Mammary epithelial cell (primary cell): ENCODE measurements at regions of chr19 and their contacts with region 1.

Region 1: DNA sequence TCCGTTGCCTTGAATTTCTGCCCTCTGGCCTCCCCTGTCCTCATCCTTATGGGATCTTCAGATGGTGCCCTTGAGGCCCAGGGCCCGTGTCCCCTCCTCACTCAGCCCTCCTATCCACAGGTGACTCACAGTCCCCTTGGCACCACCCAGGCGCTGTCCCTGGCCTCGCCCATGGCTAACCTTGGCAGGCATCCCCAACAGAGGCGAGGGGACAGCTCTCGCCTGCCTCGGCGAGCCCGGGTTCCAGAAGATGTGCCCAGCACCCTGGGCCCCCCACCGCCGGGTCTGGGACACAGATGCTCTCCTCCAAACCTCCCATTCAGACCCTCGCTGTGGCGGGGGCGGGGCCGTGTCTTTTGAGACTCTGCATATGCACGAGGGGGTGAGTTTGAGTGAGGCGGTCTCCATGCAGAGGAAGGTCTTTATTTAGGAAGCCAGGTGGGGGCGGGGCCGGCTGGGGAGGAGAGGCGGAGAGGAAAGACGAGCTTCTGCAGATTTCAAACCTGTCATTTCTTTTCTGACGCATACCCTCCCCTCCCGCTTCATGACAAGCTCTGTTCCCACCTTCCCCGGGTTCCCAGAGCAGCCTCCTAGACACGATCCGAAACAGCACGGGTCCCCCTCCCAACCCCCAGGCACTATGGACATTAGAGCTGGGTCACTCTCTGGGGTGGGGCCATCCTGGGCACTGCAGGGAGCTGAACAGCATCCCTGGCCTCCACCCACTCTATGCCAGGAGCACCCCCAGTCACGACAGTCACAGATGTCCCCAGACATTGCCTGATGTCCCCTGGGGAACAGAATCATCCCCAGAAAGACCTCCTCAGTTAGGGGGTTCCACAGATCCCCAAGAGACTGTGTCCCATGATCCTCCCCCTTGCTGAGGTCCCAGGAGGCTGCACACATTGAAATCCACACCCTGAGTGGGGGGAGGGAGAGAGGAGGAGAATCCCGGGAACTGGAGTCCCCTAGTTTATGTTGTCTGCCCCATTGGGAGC is 48.5 kb downstream of the GNG7 start:
- DNase-seq: no peak
- H3K4me3 ChIP-seq: no peak overlapping the region
- H3K27ac ChIP-seq: no peak overlapping the region
- H3K4me1 ChIP-seq: no peaks in the 10 kb centered on the region
- H3K27me3 ChIP-seq: no peaks in the 10 kb centered on the region
- CTCF ChIP-seq: no peak

Region 2: DNA sequence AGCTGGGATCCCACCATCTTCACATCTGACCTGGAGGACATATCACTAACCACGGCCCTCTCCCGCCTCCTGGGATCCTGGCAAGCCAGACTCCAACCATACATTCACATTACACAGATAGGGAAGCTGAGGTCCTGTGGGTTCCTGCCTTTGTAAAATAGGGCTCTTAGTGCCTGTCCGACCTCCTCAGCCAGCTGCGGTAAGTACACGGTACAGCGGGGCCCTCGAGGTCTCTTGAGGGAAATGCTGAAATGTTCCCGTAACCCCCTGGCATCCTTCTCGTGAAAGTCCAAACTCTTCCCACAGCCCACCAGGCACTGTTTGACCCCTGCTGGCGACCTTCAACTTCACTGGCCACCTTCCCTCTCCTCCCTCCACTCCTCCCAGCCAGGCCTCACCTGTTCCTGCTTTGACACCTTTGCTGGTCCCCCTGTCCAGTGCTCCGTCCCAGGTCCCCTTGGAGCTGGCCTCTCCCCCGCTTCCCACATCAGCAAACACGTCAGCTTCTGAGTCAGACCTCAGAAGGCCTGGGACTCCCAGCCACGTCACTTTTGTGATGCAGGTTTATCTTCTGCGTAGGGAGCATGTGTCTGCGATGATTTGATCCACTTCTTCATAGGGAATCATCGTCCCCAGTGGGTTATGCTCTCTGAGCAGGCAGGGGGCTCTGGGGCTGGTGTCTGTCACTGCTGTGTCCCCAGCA is 57.3 kb after region 1 on chr19:
- CTCF ChIA-PET with region 1: no interaction called
- dilution Hi-C with region 1: no loop called
- in situ Hi-C with region 1: no loop called
- intact Hi-C with region 1: no loop called
- DNase-seq: no peak
- H3K4me3 ChIP-seq: no peak overlapping the region
- H3K27ac ChIP-seq: no peak overlapping the region
- H3K4me1 ChIP-seq: no peaks in the 10 kb centered on the region
- H3K27me3 ChIP-seq: no peaks in the 10 kb centered on the region
- CTCF ChIP-seq: no peak

Region 3: GRCh38 chr19:2750808-2751443 is 96.9 kb after region 1 on chr19:
- CTCF ChIA-PET with region 1: no interaction called
- dilution Hi-C with region 1: no loop called
- in situ Hi-C with region 1: loop called (anchors 5 kb)
- intact Hi-C with region 1: no loop called
- DNase-seq: no peak
- H3K4me3 ChIP-seq: no peak overlapping the region
- H3K27ac ChIP-seq: no peak overlapping the region
- H3K4me1 ChIP-seq: peaks cover 5% of the 10 kb centered on the region
- H3K27me3 ChIP-seq: no peaks in the 10 kb centered on the region
- CTCF ChIP-seq: no peak

Region 4: DNA sequence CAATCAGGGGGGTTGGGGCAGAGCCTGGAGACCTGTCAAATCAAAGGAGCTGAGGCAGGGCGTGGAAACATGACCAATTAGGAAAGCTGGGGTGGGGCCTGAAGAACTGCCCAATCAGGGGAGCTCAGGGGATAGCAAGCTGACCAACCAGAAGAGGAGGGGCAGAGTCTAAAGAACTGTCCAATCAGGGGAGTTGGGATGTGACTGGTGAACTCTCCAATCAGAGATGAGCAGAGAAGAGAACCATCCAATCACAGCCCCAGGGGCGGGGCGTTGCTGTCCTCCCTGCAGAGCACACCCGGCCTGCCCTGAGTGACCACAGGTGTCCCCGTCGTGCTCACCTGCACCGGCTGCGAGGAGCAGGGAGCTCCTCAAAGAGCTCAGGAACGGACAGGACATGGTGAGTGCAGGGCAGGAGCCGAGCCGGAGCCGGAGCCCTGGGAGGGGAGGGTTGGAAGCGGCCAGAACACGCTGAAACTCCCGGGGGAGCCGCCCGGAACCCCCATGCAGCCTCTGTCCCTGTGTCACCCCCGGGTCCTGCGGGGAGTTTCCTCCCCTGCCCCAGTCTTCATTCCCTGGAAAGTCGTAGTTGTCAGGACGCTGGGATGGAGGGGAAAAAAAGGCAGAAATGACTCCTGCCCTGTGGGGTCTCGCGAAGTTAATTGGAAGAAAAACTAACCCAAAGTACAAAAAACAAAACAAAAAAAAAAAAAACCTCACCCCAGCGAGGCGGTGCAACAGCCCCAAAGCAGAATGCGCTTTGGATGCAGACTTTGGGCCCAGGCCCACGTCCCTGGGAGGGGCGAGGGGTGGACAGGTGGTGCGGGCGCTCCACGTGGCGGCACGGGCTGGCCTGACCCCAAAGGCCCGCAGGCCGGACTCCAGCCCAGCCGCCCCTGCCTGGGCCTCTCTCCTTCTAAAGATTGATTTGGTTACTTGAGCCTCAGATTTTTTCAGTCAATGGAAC is 213.3 kb after region 1 on chr19 and contains the start of gene ZNF556:
- CTCF ChIA-PET with region 1: no interaction called
- dilution Hi-C with region 1: no loop called
- in situ Hi-C with region 1: loop called (anchors 5 kb)
- intact Hi-C with region 1: no loop called
- DNase-seq: no peak
- H3K4me3 ChIP-seq: no peak within 1 kb of the TSS
- H3K27ac ChIP-seq: no peak within 1 kb of the TSS
- H3K4me1 ChIP-seq: no peaks in the 10 kb centered on the region
- H3K27me3 ChIP-seq: no peaks in the 10 kb centered on the region
- CTCF ChIP-seq: no peak
- total RNA-seq, gene ZNF556: 1.5 to 2.3 TPM